IMR-90 (cell line): ENCODE measurements at regions of chr2 and their contacts with region 1.

Region 1: DNA sequence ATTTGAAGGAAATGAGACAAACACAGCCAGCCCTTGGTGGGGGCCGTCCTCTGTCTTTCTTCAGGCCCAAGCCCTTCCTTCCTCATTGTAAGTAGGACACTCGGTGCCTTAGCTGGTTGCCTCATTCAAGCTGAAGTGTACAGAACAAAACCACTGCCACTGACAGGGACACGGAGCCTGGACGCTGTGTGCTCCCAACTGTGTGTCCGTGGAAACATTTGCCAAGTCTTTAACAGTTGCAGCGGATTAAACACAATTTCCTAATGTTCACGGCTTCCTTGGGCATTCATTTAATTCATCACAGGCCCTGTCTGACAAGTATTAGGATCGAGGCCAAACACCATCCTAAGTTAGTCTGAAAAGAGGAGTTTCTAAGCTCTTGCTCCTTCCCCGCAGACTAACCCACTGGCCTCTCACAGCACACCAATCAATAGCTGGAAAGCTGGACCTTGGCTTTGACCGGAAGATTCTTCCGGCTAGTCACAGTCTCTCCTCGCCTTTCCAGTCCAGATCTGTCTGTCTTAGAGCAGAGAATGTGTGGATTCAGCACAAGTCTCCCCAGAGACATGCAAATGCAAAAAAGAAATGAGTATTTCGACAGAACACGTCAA is 68.7 kb upstream of the ACSL3 start:
- DNase-seq: no peak
- ATAC-seq: no peak
- H3K4me3 ChIP-seq: no peak overlapping the region
- H3K27ac ChIP-seq: no peak overlapping the region
- H3K4me1 ChIP-seq: peaks cover 8% of the 10 kb centered on the region
- H3K27me3 ChIP-seq: no peaks in the 10 kb centered on the region
- CTCF ChIP-seq: no peak
- POLR2A ChIP-seq: no peak
- RAD21 ChIP-seq: no peak

Region 2: DNA sequence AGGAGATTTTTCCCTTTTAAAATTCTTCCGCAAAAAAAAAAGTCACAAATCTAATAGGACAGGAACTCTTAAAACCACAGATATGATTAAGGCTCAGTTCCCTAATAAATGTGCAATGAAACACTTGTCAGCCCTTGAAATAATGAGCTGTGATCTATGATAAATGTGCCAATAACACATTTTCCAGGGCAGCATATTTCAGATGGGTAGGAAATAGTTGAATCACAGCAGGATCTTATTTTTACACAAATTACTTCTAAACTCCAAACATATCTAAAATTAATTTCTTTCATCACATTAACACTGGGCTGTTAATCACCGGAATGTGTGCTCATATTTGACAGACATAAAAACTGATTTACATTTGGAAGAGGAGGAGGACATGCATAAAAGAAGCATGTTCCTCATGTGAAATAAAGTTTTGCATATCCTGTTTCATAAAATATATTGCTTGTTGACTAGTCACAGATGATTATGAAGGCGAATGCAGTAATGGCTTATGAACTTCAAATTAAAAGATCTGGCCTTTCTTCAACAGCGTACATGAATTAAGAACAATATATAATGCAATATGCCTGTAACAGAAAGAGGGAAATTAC is 774.8 kb before region 1 on chr2:
- CTCF ChIA-PET with region 1: no interaction called
- POLR2A ChIA-PET with region 1: no interaction called
- dilution Hi-C with region 1: no loop called
- in situ Hi-C with region 1: no loop called
- intact Hi-C with region 1: no loop called
- DNase-seq: no peak
- ATAC-seq: no peak
- H3K4me3 ChIP-seq: no peak overlapping the region
- H3K27ac ChIP-seq: no peak overlapping the region
- H3K4me1 ChIP-seq: no peaks in the 10 kb centered on the region
- H3K27me3 ChIP-seq: no peaks in the 10 kb centered on the region
- CTCF ChIP-seq: no peak
- POLR2A ChIP-seq: no peak
- RAD21 ChIP-seq: no peak

Region 3: GRCh38 chr2:224062481-224063297 is 1270.6 kb after region 1 on chr2:
- CTCF ChIA-PET with region 1: interaction called, 11 read pairs
- POLR2A ChIA-PET with region 1: no interaction called
- dilution Hi-C with region 1: no loop called
- in situ Hi-C with region 1: no loop called
- intact Hi-C with region 1: no loop called
- DNase-seq: no peak
- ATAC-seq: no peak
- H3K4me3 ChIP-seq: no peak overlapping the region
- H3K27ac ChIP-seq: no peak overlapping the region
- H3K4me1 ChIP-seq: no peaks in the 10 kb centered on the region
- H3K27me3 ChIP-seq: peaks cover 3% of the 10 kb centered on the region
- CTCF ChIP-seq: no peak
- POLR2A ChIP-seq: no peak
- RAD21 ChIP-seq: no peak